ENCODE measurements at regions of chr14 and their contacts with region 1.

Region 1: GRCh38 chr14:55270832-55271565 is at the start of gene FBXO34:
- DNase-seq: peak; percentile 100
- H3K4me3 Mint-ChIP-seq: peak within 1 kb of the TSS; percentile 91
- H3K27ac Mint-ChIP-seq: peak within 1 kb of the TSS; percentile 96
- H3K4me1 Mint-ChIP-seq: peaks cover 32% of the 10 kb centered on the region
- H3K27me3 Mint-ChIP-seq: no peaks in the 10 kb centered on the region
- total RNA-seq, gene FBXO34: 25.3 and 26.2 TPM in 2 replicates

Region 2: GRCh38 chr14:55051426-55052268 is 219.4 kb before region 1 on chr14 and contains the start of gene MAPK1IP1L:
- intact Hi-C with region 1: no loop called
- DNase-seq: peak; percentile 98
- H3K4me3 Mint-ChIP-seq: peak within 1 kb of the TSS; percentile 93
- H3K27ac Mint-ChIP-seq: peak within 1 kb of the TSS; percentile 96
- H3K4me1 Mint-ChIP-seq: peaks cover 36% of the 10 kb centered on the region
- H3K27me3 Mint-ChIP-seq: no peaks in the 10 kb centered on the region
- total RNA-seq, gene MAPK1IP1L: 142 and 144 TPM in 2 replicates

Region 3: GRCh38 chr14:55191203-55192053 is 79.6 kb before region 1 on chr14 and contains the start of gene DLGAP5:
- intact Hi-C with region 1: loop called (anchors 2 kb)
- DNase-seq: peak; percentile 97
- H3K4me3 Mint-ChIP-seq: peak within 1 kb of the TSS; percentile 94
- H3K27ac Mint-ChIP-seq: peak within 1 kb of the TSS; percentile 87
- H3K4me1 Mint-ChIP-seq: peaks cover 38% of the 10 kb centered on the region
- H3K27me3 Mint-ChIP-seq: no peaks in the 10 kb centered on the region
- total RNA-seq, gene DLGAP5: 28.7 and 32.4 TPM in 2 replicates

Region 4: DNA sequence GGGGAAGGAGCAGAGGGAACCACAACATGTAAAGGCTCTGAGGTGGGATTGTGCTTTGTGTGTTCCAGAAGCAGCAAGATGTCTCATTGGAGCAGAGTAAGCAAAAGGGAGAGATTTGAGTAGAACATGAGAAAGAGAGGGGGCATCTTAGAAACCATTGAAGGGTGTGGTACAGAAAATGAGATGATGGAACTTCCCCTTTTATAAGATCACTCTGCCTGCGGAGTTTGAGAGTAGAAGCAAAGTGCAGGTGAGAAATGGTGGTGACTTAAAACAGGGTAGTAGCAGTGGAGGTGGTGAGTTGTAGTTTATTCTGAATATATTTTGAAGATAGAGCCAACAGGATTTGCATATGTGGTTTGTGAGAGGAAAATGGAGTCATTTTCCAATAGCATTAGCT is 56.2 kb after region 1 on chr14:
- intact Hi-C with region 1: loop called (anchors 1 kb)
- DNase-seq: no peak
- H3K4me3 Mint-ChIP-seq: no peak overlapping the region
- H3K27ac Mint-ChIP-seq: peak overlapping the region; percentile 3
- H3K4me1 Mint-ChIP-seq: peaks cover 45% of the 10 kb centered on the region
- H3K27me3 Mint-ChIP-seq: no peaks in the 10 kb centered on the region

Region 5: DNA sequence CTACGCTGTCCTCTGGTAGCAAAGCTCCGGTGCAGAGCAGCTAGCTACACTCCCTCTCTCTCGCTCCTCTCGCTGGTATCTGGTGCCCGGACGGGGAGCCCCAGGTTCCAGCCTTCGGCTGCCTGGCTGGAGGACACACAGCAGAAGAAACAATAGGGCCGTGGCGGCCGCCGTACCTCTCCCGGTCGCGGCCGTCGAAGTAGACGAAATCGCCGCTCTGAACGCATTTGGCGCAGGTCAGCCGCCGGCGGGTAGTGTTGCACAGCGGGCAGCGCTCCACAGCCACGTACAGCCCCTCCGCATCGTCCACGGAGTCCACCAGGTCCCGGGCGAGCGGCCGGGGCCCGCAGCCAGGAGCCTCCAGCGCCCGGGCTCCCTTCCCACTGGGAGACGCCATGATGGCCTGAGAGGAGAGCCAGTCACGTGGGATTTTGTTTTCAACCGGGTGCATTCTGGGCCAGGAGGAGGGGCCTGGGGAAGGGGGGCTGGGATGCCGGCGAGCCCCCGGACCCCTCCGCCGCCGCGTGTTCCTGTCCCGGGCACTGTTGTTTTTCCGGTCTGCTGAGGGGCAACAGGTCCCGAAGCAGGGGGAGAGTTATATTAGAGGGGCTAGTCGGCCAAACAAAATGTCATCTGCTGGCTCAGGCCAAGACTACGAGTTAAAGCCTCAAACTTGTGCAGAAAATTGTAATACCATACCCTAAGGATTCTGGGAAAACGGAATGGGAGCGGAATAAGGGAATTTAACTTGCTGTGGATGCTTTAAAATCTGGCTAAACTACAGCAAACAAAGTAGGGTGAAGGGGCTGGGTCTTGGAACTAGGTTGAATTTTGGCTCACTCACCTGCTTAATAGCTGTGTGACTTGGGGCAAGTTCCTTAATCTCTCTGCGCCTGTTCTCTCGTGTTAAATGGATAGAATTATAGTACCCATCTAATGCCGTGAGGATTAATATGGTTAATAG is 140.7 kb after region 1 on chr14 and contains the start of gene ATG14:
- intact Hi-C with region 1: loop called (anchors 1 kb)
- DNase-seq: peak; percentile 93
- H3K4me3 Mint-ChIP-seq: peak within 1 kb of the TSS; percentile 91
- H3K27ac Mint-ChIP-seq: peak within 1 kb of the TSS; percentile 92
- H3K4me1 Mint-ChIP-seq: peaks cover 26% of the 10 kb centered on the region
- H3K27me3 Mint-ChIP-seq: peaks cover 4% of the 10 kb centered on the region
- total RNA-seq, gene ATG14: 4.9 and 5.8 TPM in 2 replicates

Measured in activated CD4-positive, alpha-beta T cell treated with anti-CD3 and anti-CD28 coated beads, Interleukin-2, amount 10 ng/mL, durations not matched to agents 24 days and 14 days (primary cell).